ENCODE measurements at regions of chr10 and their contacts with region 1.

Region 1: GRCh38 chr10:112137154-112137987 is 46.2 kb downstream of the GPAM start:
- DNase-seq: peak in 1 of 2 donors; percentile 76
- H3K4me3 ChIP-seq: no peak overlapping the region
- H3K27ac ChIP-seq: no peak overlapping the region
- H3K4me1 ChIP-seq: no peaks in the 10 kb centered on the region
- H3K27me3 ChIP-seq: no peaks in the 10 kb centered on the region
- CTCF ChIP-seq: peak; percentile 61 to 83 (median 71)

Region 2: GRCh38 chr10:111076191-111076681 is 1061.1 kb before region 1 on chr10:
- intact Hi-C with region 1: loop called (anchors 5 kb)
- DNase-seq: no peak
- H3K4me3 ChIP-seq: peak overlapping the region; percentile 59 to 70
- H3K27ac ChIP-seq: no peak overlapping the region
- H3K4me1 ChIP-seq: peaks cover 10 to 20% of the 10 kb centered on the region in 2 donors
- H3K27me3 ChIP-seq: peaks cover 9% of the 10 kb centered on the region
- CTCF ChIP-seq: peak; percentile 30 to 67 (median 50)

Region 3: GRCh38 chr10:111756217-111757061 is 380.9 kb before region 1 on chr10:
- intact Hi-C with region 1: loop called (anchors 2 kb)
- DNase-seq: no peak
- H3K4me3 ChIP-seq: no peak overlapping the region
- H3K27ac ChIP-seq: no peak overlapping the region
- H3K4me1 ChIP-seq: no peaks in the 10 kb centered on the region
- H3K27me3 ChIP-seq: no peaks in the 10 kb centered on the region
- CTCF ChIP-seq: peak in 2 of 3 experiments; percentile 30 to 40